Gastrocnemius medialis (tissue), 4 donors: ENCODE measurements at regions of chr9 and their contacts with region 1.

Region 1: GRCh38 chr9:128094166-128094967 is 26.3 kb downstream of the SLC25A25 start:
- DNase-seq: peak; percentile 88 to 94
- ATAC-seq: peak; percentile 70 to 76
- H3K4me3 ChIP-seq: peak overlapping the region; percentile 6 to 33 (median 27)
- H3K27ac ChIP-seq: peak overlapping the region; percentile 72 to 83 (median 81)
- H3K4me1 ChIP-seq: peaks cover 57 to 59% of the 10 kb centered on the region in 2 donors
- H3K27me3 ChIP-seq: no peaks in the 10 kb centered on the region
- CTCF ChIP-seq: no peak
- POLR2A ChIP-seq: peak in 1 of 2 donors; percentile 87

Region 2: GRCh38 chr9:127828262-127829031 is 265.9 kb before region 1 on chr9:
- in situ Hi-C with region 1: no loop called
- intact Hi-C with region 1: no loop called
- DNase-seq: peak; percentile 78 to 87
- ATAC-seq: peak; percentile 80 to 81
- H3K4me3 ChIP-seq: peak overlapping the region; percentile 29 to 44 (median 42)
- H3K27ac ChIP-seq: peak overlapping the region; percentile 64 to 84 (median 78)
- H3K4me1 ChIP-seq: peaks cover 26 to 41% of the 10 kb centered on the region in 2 donors
- H3K27me3 ChIP-seq: no peaks in the 10 kb centered on the region
- CTCF ChIP-seq: peak in 2 of 5 experiments; percentile 17 to 25
- POLR2A ChIP-seq: peak; percentile 69 to 84

Region 3: GRCh38 chr9:127968717-127969383 is 125.5 kb before region 1 on chr9:
- in situ Hi-C with region 1: no loop called
- intact Hi-C with region 1: loop called (anchors 5 kb)
- DNase-seq: peak in 1 of 2 donors; percentile 66
- ATAC-seq: peak in 1 of 2 donors; percentile 32
- H3K4me3 ChIP-seq: no peak overlapping the region
- H3K27ac ChIP-seq: peak overlapping the region; percentile 49 to 72 (median 54)
- H3K4me1 ChIP-seq: peaks cover 63 to 73% of the 10 kb centered on the region in 2 donors
- H3K27me3 ChIP-seq: no peaks in the 10 kb centered on the region
- CTCF ChIP-seq: no peak
- POLR2A ChIP-seq: no peak

Region 4: GRCh38 chr9:127980706-127981558 is 113.4 kb before region 1 on chr9 and contains the start of gene EEIG1:
- in situ Hi-C with region 1: no loop called
- intact Hi-C with region 1: loop called (anchors 5 kb)
- DNase-seq: peak; percentile 92 to 93
- ATAC-seq: peak; percentile 79 to 82
- H3K4me3 ChIP-seq: peak within 1 kb of the TSS; percentile 67 to 97 (median 78)
- H3K27ac ChIP-seq: peak within 1 kb of the TSS; percentile 89 to 95 (median 92)
- H3K4me1 ChIP-seq: peaks cover 44 to 50% of the 10 kb centered on the region in 2 donors
- H3K27me3 ChIP-seq: no peaks in the 10 kb centered on the region
- CTCF ChIP-seq: no peak
- POLR2A ChIP-seq: peak; percentile 93 to 95
- total RNA-seq, gene EEIG1: 1.8 to 4.5 (median 2.8) TPM

Region 5: DNA sequence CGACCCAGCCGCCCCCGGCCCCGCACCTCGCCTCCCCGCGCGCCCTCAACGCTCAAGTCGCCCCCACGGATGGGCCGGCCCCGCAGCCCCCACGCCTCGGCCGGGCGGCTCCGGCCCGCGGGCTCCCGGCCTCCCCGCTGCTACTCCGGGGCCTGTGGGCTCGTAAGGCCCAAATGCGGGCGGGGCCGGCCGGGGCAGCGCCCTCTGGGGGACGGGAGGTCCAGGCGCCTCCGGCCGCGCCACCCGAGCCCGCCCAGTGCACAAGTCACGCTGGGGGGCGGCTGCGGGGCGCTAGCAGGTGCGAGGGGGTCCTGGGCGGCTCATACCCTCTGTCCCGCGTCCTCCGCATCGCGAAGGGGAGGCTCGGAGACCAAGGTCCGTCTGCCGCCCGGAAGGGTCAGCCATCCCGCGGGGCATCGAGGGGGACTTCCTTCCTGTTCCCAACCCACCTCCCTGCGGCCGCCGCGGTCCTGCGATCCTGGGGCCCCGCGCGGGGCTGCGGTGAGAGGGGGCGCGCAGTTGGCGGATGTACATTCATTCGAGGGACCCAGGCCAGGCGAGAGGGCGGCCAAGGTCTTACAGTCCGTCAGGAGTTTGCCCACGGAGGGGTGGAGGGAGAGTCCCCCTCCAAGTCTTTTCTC is 97.2 kb after region 1 on chr9 and contains the start of gene CIZ1:
- in situ Hi-C with region 1: no loop called
- intact Hi-C with region 1: no loop called
- DNase-seq: peak; percentile 52 to 74
- ATAC-seq: peak; percentile 79 to 83
- H3K4me3 ChIP-seq: peak within 1 kb of the TSS; percentile 72 to 92 (median 80)
- H3K27ac ChIP-seq: peak within 1 kb of the TSS; percentile 73 to 93 (median 90)
- H3K4me1 ChIP-seq: peaks cover 10 to 15% of the 10 kb centered on the region in 2 donors
- H3K27me3 ChIP-seq: no peaks in the 10 kb centered on the region
- CTCF ChIP-seq: peak; percentile 65 to 96 (median 76)
- POLR2A ChIP-seq: peak in 1 of 2 donors; percentile 47
- total RNA-seq, gene CIZ1: 47.8 to 61.3 (median 53.0) TPM

Region 6: GRCh38 chr9:128393171-128393775 is 298.9 kb after region 1 on chr9:
- in situ Hi-C with region 1: no loop called
- intact Hi-C with region 1: no loop called
- DNase-seq: no peak
- ATAC-seq: no peak
- H3K4me3 ChIP-seq: no peak overlapping the region
- H3K27ac ChIP-seq: no peak overlapping the region
- H3K4me1 ChIP-seq: peaks cover 0 to 5% of the 10 kb centered on the region in 2 donors
- H3K27me3 ChIP-seq: peaks cover 0 to 2% (median 0%) of the 10 kb centered on the region in 3 donors
- CTCF ChIP-seq: no peak
- POLR2A ChIP-seq: no peak